Posterior cingulate gyrus (tissue), 11 donors: ENCODE measurements at regions of chr17 and their contacts with region 1.

Region 1: DNA sequence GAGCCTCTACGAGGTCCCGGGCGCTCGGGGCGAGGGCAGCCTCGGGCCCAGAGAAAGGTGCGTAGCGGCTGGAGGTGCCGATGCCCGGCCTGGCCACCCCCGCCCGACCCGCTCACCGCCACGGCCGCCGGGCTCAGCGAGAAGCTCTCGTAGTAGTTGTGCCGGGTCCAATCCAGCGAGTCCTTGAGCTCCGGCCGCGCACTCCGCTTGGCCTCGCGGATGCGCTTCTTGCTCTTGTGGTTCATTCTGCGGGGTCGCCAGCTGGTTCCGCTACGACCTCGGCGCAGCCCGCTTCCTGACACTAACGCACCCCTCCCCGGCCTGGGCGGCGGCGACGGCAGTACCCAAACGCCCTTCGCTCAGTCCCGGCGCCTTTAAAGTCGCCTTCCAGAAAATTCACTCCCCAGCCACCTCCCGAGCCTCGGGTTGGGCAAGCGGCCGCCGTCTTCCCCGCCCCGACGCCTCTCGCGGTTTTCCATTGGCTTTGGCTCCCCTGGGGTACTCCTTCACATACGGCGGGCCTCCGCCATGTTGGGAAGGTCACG is at the start of gene JMJD6:
- DNase-seq: peak; percentile 93 to 99 (median 97)

Region 2: GRCh38 chr17:76671123-76671911 is 55.0 kb before region 1 on chr17:
- intact Hi-C with region 1: loop called (anchors 5 kb)
- DNase-seq: peak; percentile 100

Region 3: DNA sequence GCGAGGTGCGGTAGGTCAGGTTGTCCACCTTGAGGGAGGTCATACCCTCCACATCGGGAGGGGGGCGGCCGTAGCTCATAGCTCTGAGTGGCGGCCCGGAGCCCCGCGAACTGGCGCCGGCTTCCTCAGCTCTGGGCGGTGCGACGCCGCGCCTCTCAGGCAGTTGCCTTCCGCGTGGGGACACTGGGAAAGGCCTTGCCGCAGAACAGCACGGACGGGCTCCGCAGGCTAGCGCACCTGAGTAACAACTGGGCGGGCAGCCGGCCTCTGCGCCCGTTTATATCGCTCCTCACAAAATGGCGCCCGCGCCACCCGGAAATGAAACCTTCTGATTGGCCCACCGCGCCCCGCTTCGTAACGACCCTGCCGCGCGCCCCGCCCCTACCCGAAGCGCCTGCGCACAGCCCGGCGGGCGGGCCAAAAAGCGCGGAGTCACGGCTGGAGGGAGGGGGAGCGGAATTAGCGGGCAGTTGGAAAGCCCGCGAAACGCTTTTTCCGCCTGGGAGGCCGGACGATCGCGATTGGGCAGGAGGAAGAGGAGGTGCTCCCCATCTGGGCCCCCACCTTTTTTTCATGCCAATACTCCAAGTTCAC is 10.9 kb after region 1 on chr17 and contains the start of gene SRSF2:
- intact Hi-C with region 1: loop called (anchors 1 kb)
- DNase-seq: peak; percentile 97 to 100 (median 98)